AG04450 (cell line): ENCODE measurements at regions of chr2 and their contacts with region 1.

Region 1: DNA sequence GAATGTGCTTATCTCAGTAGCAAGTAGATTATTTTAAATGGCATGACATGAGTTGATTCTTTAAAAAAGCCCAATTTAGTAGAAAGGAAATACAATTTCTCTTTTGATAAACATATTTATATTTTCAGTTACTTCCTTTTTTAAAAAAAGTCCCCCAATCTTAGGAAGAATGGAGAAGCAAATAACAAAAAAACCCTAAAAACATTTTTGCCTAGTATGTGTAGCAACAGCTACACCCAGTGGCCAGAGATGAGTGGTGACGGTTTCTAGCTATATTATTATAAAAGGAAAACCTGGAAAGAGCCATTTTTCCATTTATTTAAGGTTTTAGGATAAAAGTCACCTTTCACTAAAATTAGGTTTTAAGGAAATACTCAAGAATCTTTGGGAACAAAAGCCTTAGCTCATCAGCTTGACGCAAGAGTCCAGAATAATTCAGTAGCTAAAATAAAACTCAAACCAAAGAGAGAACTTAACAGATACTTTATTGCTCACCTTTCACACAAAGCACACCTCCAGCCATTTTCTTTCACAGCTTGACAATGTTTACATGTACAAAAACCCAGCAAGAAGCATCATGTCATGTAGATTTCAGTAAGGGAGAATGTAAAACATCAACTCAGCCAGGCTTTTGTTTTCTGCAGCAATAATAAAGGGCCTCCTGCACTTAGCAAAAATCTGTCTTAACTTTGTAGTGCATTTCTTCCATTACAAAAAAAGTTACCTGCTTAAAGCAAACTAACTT is 15.7 kb downstream of the FAM98A start:
- DNase-seq: no peak
- H3K4me3 ChIP-seq: no peak overlapping the region
- H3K27ac ChIP-seq: no peak overlapping the region
- H3K27me3 ChIP-seq: no peaks in the 10 kb centered on the region
- CTCF ChIP-seq: peak; percentile 92

Region 2: DNA sequence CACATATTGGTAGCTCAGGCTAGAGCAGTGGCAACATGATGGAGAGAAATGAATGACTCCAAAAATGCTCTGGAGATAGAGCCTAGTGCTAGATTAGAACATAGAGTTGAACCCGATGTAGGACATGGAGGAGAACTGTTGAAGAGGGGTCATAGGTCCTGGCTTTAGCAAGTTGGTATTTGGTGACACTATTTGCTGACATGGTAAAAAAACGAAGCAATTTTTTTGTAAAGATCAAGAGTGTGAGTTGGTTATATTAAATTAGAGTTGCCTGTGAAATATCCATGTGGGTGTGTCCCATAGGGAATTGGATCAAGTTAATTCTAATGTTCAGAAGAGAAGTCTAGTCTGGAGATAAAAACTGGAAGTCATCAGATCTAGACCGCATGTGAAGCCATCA is 249.9 kb before region 1 on chr2:
- CTCF ChIA-PET with region 1: no interaction called
- POLR2A ChIA-PET with region 1: no interaction called
- DNase-seq: no peak
- H3K4me3 ChIP-seq: no peak overlapping the region
- H3K27ac ChIP-seq: no peak overlapping the region
- H3K27me3 ChIP-seq: no peaks in the 10 kb centered on the region
- CTCF ChIP-seq: no peak

Region 3: DNA sequence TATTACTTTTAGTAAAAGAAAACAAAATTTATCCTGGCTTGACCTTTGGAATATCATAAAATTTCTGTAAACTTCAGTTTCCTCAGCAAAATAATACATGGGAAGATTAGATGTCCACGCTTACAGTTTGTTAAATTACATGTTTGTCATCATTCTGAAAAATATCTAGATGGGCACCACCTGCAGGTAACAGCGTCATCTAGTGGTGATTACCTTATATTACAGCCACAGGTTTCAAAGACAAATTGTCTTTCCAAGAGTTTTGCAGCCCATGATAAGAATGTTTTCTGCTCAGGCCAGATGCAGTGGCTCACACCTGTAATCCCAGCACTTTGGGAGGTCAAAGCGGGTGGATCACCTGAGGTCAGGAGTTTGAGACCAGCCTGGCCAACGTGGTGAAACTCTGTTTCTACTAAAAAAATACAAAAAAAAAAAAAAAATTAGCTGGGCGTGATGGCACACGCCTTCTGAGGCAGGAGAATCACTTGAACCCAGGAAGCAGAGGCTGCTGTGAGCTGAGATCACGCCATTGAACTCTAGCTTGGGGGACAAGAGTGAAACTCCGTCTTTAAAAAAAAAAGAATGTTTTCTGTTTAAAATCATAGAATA is 203.3 kb before region 1 on chr2:
- CTCF ChIA-PET with region 1: interaction called, 17 read pairs
- POLR2A ChIA-PET with region 1: no interaction called
- DNase-seq: no peak
- H3K4me3 ChIP-seq: no peak overlapping the region
- H3K27ac ChIP-seq: no peak overlapping the region
- H3K27me3 ChIP-seq: no peaks in the 10 kb centered on the region
- CTCF ChIP-seq: peak; percentile 68

Region 4: DNA sequence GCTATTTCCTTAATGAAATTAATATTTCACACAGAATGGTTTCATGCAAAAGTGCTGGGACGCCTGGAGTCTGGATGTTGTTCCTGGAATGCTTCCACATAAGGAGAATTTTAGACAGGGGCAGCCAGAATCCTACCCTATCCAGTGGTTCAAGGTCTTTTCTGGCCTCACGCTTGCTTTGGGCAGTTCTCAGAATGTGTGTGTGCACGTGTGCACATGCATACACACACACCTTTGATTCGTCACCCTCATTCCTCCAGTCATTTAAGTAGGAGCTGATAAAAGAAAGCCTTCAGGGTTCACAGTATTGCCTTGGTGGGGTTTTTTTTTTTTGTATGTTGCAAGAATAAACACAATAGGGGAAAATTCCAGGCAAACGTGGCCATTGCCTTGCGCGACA is 195.9 kb before region 1 on chr2:
- CTCF ChIA-PET with region 1: interaction called, 10 read pairs
- POLR2A ChIA-PET with region 1: no interaction called
- DNase-seq: no peak
- H3K4me3 ChIP-seq: no peak overlapping the region
- H3K27ac ChIP-seq: no peak overlapping the region
- H3K27me3 ChIP-seq: no peaks in the 10 kb centered on the region
- CTCF ChIP-seq: no peak

Region 5: GRCh38 chr2:33412920-33413319 is 170.4 kb before region 1 on chr2:
- CTCF ChIA-PET with region 1: interaction called, 26 read pairs
- POLR2A ChIA-PET with region 1: no interaction called
- DNase-seq: no peak
- H3K4me3 ChIP-seq: no peak overlapping the region
- H3K27ac ChIP-seq: no peak overlapping the region
- H3K27me3 ChIP-seq: no peaks in the 10 kb centered on the region
- CTCF ChIP-seq: peak; percentile 65

Region 6: GRCh38 chr2:33441235-33441810 is 142.0 kb before region 1 on chr2:
- CTCF ChIA-PET with region 1: interaction called, 22 read pairs
- POLR2A ChIA-PET with region 1: no interaction called
- DNase-seq: no peak
- H3K4me3 ChIP-seq: no peak overlapping the region
- H3K27ac ChIP-seq: no peak overlapping the region
- H3K27me3 ChIP-seq: no peaks in the 10 kb centered on the region
- CTCF ChIP-seq: peak; percentile 82

Region 7: DNA sequence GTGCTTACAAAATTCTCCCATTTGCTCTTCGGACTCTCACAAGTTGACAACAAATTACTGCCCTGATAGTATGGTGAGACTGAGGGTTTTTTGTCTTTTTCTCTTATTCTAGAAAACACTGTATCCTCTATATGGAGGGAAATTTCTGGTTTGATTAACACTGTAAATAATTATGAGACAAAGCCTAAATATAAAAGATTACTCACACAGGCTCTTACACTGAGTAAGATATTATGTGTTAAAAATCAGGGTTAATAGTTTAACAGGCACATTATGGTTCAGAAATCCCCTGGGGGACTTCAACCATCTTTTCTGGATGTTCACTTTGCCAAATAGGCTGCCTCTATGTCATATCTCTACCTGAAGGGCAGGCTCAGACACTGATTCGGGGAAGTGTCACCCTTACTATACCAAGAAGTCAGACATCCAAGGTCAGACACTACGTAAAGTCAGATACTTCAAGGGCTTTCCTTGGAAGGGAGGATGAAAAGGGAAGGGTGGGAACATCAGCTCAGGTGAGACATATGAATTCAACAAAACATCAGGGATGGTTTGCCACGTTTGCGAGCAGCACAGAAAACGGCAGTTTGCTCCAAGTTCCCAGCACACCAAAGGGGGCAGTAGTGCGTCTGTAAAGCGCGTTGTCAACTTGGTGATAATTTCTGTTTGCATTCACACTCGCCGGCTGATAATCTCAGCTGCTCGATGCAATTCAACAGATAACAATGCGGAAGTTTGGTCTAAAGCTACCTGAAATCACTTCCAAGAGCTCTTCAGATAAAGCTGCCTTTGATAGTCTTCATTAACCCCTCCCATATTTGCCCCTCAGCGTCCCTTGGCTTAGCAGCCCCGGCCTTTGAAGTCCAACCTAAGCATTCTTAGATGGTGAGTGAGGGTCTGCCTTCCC is 107.9 kb before region 1 on chr2:
- CTCF ChIA-PET with region 1: interaction called, 15 read pairs
- POLR2A ChIA-PET with region 1: interaction called, 3 read pairs
- DNase-seq: peak; percentile 59
- H3K4me3 ChIP-seq: peak overlapping the region; percentile 73
- H3K27ac ChIP-seq: peak overlapping the region; percentile 89
- H3K27me3 ChIP-seq: no peaks in the 10 kb centered on the region
- CTCF ChIP-seq: peak; percentile 86

Region 8: GRCh38 chr2:33595385-33595784 is 12.0 kb after region 1 on chr2:
- CTCF ChIA-PET with region 1: interaction called, 17 read pairs
- POLR2A ChIA-PET with region 1: no interaction called
- DNase-seq: no peak
- H3K4me3 ChIP-seq: no peak overlapping the region
- H3K27ac ChIP-seq: no peak overlapping the region
- H3K27me3 ChIP-seq: no peaks in the 10 kb centered on the region
- CTCF ChIP-seq: no peak